Panc1 (cell line): ENCODE measurements at regions of chr6 and their contacts with region 1.

Region 1: GRCh38 chr6:26607434-26608230 is 10.9 kb downstream of the ABT1 start:
- DNase-seq: peak; percentile 57
- ATAC-seq: peak; percentile 99
- H3K4me3 ChIP-seq: peak overlapping the region; percentile 45 to 66
- H3K27ac ChIP-seq: peak overlapping the region; percentile 71
- H3K4me1 ChIP-seq: peaks cover 4% of the 10 kb centered on the region; the same call in 1 of the 2 replicates
- H3K27me3 ChIP-seq: no peaks in the 10 kb centered on the region
- CTCF ChIP-seq: peak; percentile 89

Region 2: GRCh38 chr6:27078734-27079357 is 471.2 kb after region 1 on chr6:
- CTCF ChIA-PET with region 1: interaction called, 3 read pairs
- POLR2A ChIA-PET with region 1: no interaction called
- in situ Hi-C with region 1: no loop called
- intact Hi-C with region 1: loop called (anchors 5 kb)
- DNase-seq: peak; percentile 62
- ATAC-seq: peak; percentile 98
- H3K4me3 ChIP-seq: peak overlapping the region; percentile 46 to 51
- H3K27ac ChIP-seq: no peak overlapping the region; the same call in 1 of the 2 replicates
- H3K4me1 ChIP-seq: 0 out of 2 replicates have a peak, but pooled peaks cover 4% of the 10 kb centered on the region
- H3K27me3 ChIP-seq: no peaks in the 10 kb centered on the region
- CTCF ChIP-seq: peak; percentile 81